PC-3 (cell line): ENCODE measurements at regions of chr14 and their contacts with region 1.

Region 1: DNA sequence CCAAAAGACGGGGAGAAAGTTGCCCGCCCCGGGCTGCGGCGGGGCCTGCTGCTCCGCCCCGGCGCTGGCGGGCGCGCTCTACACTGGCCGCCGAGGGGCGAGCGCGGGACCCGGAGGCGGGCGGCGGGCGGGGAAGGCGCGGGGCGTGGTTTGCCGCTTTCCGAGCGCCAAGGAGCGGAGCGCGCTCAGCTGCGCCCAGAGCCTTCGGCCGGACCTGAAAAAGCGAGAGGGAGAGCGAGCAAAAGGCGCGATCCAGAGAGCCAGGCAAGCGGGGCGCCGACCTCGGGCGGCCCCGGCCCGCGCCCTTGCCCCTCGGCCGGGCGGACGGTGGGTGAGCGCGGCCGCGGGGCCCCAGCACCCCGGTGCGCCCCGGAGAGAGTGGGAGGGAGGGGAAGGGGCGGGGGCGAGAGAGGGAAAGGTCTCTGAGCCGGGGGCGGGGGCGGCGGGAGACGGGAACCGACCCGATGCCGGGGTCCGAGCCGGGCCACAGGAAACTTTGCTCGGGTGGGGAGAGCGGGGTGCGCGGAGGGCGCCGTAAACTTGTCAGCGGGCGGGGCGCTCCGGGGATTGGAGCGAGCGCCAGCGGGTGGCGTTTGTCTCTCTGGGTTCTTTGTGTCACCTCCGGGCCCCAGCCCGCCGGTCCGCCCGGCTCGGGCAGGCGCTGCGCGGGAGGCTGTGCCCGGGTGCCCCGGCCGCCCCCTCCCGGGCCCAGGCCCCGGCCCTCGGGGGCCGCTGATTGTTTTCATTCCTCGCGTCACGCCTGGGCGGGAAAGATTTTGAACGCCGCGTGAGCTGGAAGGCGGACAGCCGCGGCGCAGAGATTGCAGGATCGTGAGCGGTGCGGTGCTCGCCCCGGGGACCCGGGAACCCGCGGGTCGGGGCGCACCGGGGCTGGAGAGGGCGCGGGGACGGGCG is at the start of gene SYNE2:
- DNase-seq: peak; percentile 82
- ATAC-seq: peak; percentile 86
- H3K4me3 ChIP-seq: peak within 1 kb of the TSS; percentile 71
- H3K27ac ChIP-seq: no peak within 1 kb of the TSS
- H3K4me1 ChIP-seq: peaks cover 12% of the 10 kb centered on the region
- H3K27me3 ChIP-seq: no peaks in the 10 kb centered on the region
- CTCF ChIP-seq: no peak
- total RNA-seq, gene SYNE2: 16.0 and 20.7 TPM in 2 replicates

Region 2: DNA sequence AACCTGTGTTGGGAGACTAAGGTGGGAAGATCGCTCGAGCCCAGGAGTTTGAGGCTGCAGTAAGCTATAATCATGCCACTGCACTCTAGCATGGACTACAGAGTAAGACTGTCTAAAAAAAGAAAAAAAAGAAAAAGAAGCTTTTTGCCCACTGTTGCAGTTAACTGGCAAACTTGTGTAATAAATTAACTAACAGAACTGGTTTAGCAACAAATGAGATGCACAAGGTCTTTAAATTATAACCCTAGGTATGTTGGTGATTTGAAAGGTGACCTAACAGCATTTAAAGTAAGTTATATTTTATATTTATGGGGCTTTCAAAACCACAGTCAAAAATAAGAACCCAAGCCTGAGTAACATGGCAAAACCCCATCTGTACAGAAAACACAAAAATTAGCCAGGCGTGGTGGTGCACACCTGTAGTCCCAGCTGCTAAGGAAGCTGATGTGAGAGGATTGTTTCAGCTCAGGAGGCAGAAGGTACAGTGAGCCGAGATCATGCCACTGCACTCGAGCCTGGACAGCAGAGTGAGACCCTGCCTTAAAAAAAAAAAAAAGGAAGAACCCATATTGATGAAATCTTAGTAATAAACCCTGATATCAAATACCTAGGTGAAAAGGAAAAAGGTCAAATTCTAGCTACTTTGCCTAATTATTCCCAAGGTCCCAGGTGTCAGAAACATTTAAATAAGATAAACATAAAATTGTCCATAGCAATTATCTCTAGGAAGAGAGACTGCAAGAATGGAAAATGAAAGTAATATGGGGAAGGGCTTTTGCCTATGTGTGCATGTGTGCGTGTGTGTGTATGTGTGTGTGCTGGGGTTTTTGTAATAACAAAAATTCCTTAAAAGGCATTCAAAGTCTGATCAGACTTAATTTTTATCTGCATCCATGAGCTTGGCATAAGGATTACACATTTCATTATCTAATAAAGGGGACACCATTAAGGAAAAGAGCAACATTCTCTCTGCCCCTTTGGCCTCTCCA is 15.2 kb after region 1 on chr14:
- CTCF ChIA-PET with region 1: interaction called, 4 read pairs
- POLR2A ChIA-PET with region 1: no interaction called
- intact Hi-C with region 1: loop called (anchors 1 kb)
- DNase-seq: peak; percentile 51
- ATAC-seq: no peak
- H3K4me3 ChIP-seq: no peak overlapping the region
- H3K27ac ChIP-seq: no peak overlapping the region
- H3K4me1 ChIP-seq: peaks cover 19% of the 10 kb centered on the region
- H3K27me3 ChIP-seq: no peaks in the 10 kb centered on the region
- CTCF ChIP-seq: no peak

Region 3: DNA sequence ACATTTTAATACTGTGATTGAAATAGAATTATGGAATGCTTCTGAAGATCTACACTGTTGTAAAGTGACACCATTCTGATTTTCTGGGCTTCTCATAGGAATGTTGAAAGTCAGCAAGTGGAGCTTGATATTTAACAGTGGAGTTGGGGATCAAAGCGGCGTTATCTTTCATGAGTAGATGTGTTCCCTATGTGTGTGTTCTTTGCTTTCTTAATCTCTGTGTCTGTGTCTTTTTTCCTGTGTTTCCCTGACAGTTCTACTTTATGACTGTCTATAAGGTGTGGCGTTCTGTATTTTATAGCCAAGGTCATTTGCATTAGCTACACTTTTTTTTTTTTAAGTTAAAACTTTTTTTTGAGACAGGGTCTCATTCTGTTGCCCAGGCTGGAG is 24.5 kb after region 1 on chr14:
- CTCF ChIA-PET with region 1: interaction called, 18 read pairs
- POLR2A ChIA-PET with region 1: no interaction called
- intact Hi-C with region 1: no loop called
- DNase-seq: no peak
- ATAC-seq: no peak
- H3K4me3 ChIP-seq: no peak overlapping the region
- H3K27ac ChIP-seq: no peak overlapping the region
- H3K4me1 ChIP-seq: peaks cover 15% of the 10 kb centered on the region; the same call in 1 of the 2 replicates
- H3K27me3 ChIP-seq: no peaks in the 10 kb centered on the region
- CTCF ChIP-seq: no peak

Region 4: DNA sequence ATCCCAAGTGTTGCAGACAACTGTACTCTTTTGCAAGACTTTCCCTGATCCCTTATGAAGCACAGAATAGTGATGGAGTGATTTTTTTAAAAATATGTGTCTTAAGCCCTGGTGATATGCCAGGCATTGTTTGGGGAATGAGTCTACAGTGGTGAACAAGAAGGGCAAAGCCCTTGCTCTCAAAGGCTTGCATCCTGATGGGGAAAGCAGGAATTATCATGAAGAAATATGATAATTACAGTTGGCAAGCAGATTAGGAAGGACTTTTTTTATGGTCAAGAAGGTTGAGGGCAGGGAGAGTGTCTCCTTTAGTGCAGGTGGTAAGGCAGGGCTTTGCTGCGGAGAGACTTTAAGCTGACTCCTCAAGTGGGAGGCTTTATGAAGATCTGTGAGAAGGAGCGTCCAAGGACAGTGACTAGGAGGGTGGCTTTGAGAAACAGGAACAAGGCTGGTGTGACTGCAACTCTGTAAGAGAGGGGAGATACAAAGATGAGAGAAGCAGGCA is 99.9 kb after region 1 on chr14:
- CTCF ChIA-PET with region 1: no interaction called
- POLR2A ChIA-PET with region 1: no interaction called
- intact Hi-C with region 1: loop called (anchors 5 kb)
- DNase-seq: no peak
- ATAC-seq: peak; percentile 64
- H3K4me3 ChIP-seq: no peak overlapping the region
- H3K27ac ChIP-seq: no peak overlapping the region
- H3K4me1 ChIP-seq: no peaks in the 10 kb centered on the region
- H3K27me3 ChIP-seq: no peaks in the 10 kb centered on the region
- CTCF ChIP-seq: no peak

Region 5: DNA sequence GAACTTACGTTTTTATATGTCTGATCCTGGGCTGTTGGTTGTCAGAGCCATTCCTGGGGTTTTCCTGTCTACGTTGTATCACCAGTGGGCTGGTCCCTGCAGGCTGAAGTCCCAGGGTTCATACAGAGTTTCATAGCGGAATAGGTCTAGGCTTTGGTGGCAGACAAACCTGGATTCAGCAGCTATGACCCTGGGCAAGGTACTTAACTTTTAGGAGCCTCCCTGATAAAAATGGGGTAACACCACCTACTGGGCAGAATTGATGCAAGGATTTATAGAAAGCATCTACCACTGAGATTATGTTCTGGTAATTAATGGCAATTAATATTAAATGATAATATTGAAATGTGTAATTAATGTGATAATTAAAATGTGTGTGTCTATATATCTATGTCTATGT is 140.9 kb after region 1 on chr14:
- CTCF ChIA-PET with region 1: interaction called, 5 read pairs
- POLR2A ChIA-PET with region 1: no interaction called
- intact Hi-C with region 1: loop called (anchors 5 kb)
- DNase-seq: peak; percentile 17
- ATAC-seq: peak; percentile 81
- H3K4me3 ChIP-seq: no peak overlapping the region
- H3K27ac ChIP-seq: no peak overlapping the region
- H3K4me1 ChIP-seq: no peaks in the 10 kb centered on the region
- H3K27me3 ChIP-seq: no peaks in the 10 kb centered on the region
- CTCF ChIP-seq: peak; percentile 54

Region 6: DNA sequence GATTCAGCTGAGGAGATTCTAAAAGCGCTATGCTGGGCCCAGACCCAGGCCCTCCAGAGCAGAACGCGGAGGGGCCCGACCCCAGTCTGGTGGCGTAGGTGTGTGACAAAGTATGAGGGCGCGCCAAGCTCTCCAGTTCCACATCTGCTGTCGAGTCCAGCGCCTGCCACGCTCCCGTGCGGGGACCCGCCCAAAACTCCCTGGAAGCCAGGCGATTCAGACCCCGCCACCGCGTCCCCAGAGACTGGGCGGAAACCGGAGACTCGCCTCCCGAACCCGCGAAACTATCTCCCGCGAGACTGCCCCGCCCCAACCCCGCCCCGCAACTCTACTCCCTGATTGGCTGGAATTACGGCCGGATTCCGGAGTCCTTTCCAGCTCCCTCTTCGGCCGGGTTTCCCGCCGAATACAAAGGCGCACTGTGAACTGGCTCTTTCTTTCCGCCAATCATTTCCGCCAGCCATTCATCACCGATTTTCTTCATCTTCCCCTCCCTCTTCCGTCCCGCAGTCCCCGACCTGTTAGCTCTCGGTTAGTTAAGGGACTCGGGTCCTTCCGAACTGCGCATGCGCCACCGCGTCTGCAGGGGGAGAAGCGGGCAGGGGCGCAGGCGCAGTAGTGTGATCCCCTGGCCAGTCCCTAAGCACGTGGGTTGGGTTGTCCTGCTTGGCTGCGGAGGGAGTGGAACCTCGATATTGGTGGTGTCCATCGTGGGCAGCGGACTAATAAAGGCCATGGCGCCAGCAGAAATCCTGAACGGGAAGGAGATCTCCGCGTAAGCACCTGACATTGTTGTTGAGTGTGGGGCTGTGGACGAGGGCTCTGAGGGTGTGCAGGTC is 534.8 kb after region 1 on chr14 and contains the start of gene MTHFD1:
- CTCF ChIA-PET with region 1: no interaction called
- POLR2A ChIA-PET with region 1: interaction called, 18 read pairs
- intact Hi-C with region 1: no loop called
- DNase-seq: peak; percentile 99
- ATAC-seq: peak; percentile 84
- H3K4me3 ChIP-seq: peak within 1 kb of the TSS; percentile 80
- H3K27ac ChIP-seq: peak within 1 kb of the TSS; percentile 48
- H3K4me1 ChIP-seq: peaks cover 11% of the 10 kb centered on the region; the same call in 1 of the 2 replicates
- H3K27me3 ChIP-seq: no peaks in the 10 kb centered on the region
- CTCF ChIP-seq: no peak
- total RNA-seq, gene MTHFD1: 89.3 and 103 TPM in 2 replicates